ENCODE measurements at regions of chr5 and their contacts with region 1.

Region 1: GRCh38 chr5:43602461-43603343 is at the start of gene NNT:
- DNase-seq: peak; percentile 83 to 89 (median 86)
- ATAC-seq: peak; percentile 84
- H3K4me3 ChIP-seq: peak within 1 kb of the TSS; percentile 60
- H3K27ac ChIP-seq: peak within 1 kb of the TSS; percentile 91
- H3K4me1 ChIP-seq: peaks cover 18% of the 10 kb centered on the region in 2 experiments
- H3K27me3 ChIP-seq: no peaks in the 10 kb centered on the region
- CTCF ChIP-seq: no peak
- EP300 ChIP-seq: no peak; the same call in 1 of the 2 replicates
- POLR2A ChIP-seq: peak; percentile 68
- RAD21 ChIP-seq: no peak
- polyA plus RNA-seq, gene NNT: 21.9 to 30.5 TPM

Region 2: DNA sequence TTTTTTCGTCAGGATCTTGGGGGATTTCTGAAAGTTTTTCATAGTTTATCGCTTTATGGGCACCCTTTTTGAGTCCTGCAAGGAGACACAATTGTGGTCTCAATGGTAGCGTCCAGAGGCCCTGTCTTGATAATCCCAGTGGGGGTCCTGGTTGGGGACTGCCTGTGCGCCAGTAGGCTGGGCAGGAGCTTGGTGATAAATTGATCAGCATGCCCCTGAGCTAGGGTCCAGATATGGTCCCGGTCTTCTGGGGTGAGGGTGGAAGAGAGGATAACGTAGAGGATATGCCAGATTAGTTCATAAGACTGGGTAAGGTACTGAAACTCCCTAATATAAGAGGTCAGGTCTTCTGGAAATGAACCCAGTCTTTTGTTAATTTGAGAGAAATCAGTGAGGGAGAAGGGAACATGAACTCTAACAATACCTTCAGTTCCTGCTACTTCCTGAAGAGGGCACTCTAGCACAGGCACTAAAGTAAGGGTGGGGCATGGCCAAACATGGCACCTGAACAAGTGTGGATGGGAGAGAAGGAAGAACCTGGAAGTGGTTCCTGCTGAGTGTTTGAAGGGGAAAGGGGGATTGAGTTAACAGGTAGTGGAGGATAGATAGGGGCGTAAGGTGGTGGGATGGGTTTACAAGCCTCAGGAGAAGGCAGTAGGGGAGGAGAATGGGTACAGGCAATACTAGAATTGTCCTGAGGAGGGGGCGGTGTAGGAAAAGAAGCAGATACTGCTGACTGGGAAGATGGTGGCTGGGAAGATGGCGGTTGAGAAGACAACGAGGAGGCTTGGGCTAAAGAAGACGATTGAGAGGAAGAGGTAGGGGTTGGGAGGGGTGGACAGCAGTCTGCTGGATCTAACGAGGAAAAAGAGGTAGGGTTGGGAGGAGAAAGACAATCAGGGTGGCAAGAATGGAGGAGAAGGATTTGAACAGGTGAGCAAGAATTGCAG is 528.8 kb before region 1 on chr5:
- CTCF ChIA-PET with region 1: no interaction called
- POLR2A ChIA-PET with region 1: no interaction called
- in situ Hi-C with region 1: no loop called
- intact Hi-C with region 1: loop called (anchors 10 kb)
- DNase-seq: peak; percentile 63 to 86 (median 68)
- ATAC-seq: peak; percentile 63
- H3K4me3 ChIP-seq: no peak overlapping the region
- H3K27ac ChIP-seq: peak overlapping the region; percentile 90
- H3K4me1 ChIP-seq: peaks cover 17 to 37% of the 10 kb centered on the region in 2 experiments
- H3K27me3 ChIP-seq: no peaks in the 10 kb centered on the region
- CTCF ChIP-seq: peak; percentile 84 to 93 (median 85)
- EP300 ChIP-seq: no peak
- POLR2A ChIP-seq: peak; percentile 53
- RAD21 ChIP-seq: peak; percentile 95

Region 3: DNA sequence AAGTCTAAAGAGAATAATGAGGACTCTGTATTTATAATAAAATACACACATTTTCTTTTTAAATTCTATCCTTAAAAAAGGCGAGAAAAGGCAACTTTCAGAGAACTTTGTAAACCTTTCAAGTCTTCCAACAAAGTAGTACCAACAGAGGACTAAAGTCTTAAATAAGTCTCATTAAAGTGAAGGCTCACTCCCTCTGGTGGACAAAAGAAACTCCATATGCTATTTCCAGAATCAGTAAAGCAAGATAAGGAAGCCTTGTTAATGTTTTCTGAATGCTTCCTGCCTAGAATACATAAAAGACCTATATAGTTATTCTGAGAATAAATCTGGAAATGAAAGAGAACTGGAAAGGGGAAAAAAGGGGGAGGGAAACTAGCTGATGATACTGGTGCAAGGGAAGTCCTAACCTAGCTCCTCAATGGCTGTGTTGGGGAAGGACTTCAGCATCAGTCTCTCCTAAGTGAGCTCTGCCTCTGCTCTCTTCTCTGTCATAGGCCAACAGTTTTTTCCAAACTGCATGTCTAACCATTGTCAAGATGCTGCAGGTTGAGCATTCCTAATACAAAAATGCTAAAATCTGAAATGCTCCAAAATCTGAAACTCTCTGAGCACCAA is 296.6 kb before region 1 on chr5:
- CTCF ChIA-PET with region 1: no interaction called
- POLR2A ChIA-PET with region 1: no interaction called
- in situ Hi-C with region 1: no loop called
- intact Hi-C with region 1: loop called (anchors 10 kb)
- DNase-seq: peak; percentile 41 to 85 (median 44)
- ATAC-seq: peak; percentile 78
- H3K4me3 ChIP-seq: no peak overlapping the region
- H3K27ac ChIP-seq: no peak overlapping the region
- H3K4me1 ChIP-seq: peaks cover 11 to 57% of the 10 kb centered on the region in 2 experiments
- H3K27me3 ChIP-seq: no peaks in the 10 kb centered on the region
- CTCF ChIP-seq: peak; percentile 62 to 83 (median 72); a peak in 5 of 6 replicates
- EP300 ChIP-seq: no peak
- POLR2A ChIP-seq: no peak
- RAD21 ChIP-seq: peak; percentile 83 to 85

Region 4: GRCh38 chr5:43514816-43515677 is 87.7 kb before region 1 on chr5 and contains the start of gene C5orf34:
- CTCF ChIA-PET with region 1: no interaction called
- POLR2A ChIA-PET with region 1: no interaction called
- in situ Hi-C with region 1: no loop called
- intact Hi-C with region 1: loop called (anchors 5 kb)
- DNase-seq: peak; percentile 98 to 99 (median 99)
- ATAC-seq: peak; percentile 96
- H3K4me3 ChIP-seq: peak within 1 kb of the TSS; percentile 64
- H3K27ac ChIP-seq: peak within 1 kb of the TSS; percentile 85
- H3K4me1 ChIP-seq: peaks cover 0 to 16% of the 10 kb centered on the region in 2 experiments; a peak in 4 of 5 replicates
- H3K27me3 ChIP-seq: no peaks in the 10 kb centered on the region
- CTCF ChIP-seq: peak in 1 of 3 experiments; percentile 21; a peak in 1 of 6 replicates
- EP300 ChIP-seq: peak; percentile 6; the same call in 1 of the 2 replicates
- POLR2A ChIP-seq: peak; percentile 97
- RAD21 ChIP-seq: 0 out of 4 replicates have a peak, but pooled peaks of 1 of the 2 experiments have one; percentile 9
- polyA plus RNA-seq, gene C5orf34: 21.4 to 27.8 TPM

Region 5: GRCh38 chr5:43556857-43557542 is 45.7 kb before region 1 on chr5 and contains the start of gene PAIP1:
- CTCF ChIA-PET with region 1: no interaction called
- POLR2A ChIA-PET with region 1: interaction called, 5 read pairs
- in situ Hi-C with region 1: no loop called
- intact Hi-C with region 1: loop called (anchors 2 kb)
- DNase-seq: peak; percentile 92 to 93 (median 92)
- ATAC-seq: peak; percentile 90
- H3K4me3 ChIP-seq: peak within 1 kb of the TSS; percentile 78
- H3K27ac ChIP-seq: peak within 1 kb of the TSS; percentile 93
- H3K4me1 ChIP-seq: peaks cover 11 to 21% of the 10 kb centered on the region in 2 experiments
- H3K27me3 ChIP-seq: no peaks in the 10 kb centered on the region
- CTCF ChIP-seq: peak; percentile 61 to 79 (median 68); a peak in 5 of 6 replicates
- EP300 ChIP-seq: 0 out of 2 replicates have a peak, but pooled peaks have one; percentile 3
- POLR2A ChIP-seq: peak; percentile 88
- RAD21 ChIP-seq: peak in 1 of 2 experiments; percentile 14; a peak in 2 of 4 replicates
- polyA plus RNA-seq, gene PAIP1: 51.7 to 56.9 TPM

Region 6: DNA sequence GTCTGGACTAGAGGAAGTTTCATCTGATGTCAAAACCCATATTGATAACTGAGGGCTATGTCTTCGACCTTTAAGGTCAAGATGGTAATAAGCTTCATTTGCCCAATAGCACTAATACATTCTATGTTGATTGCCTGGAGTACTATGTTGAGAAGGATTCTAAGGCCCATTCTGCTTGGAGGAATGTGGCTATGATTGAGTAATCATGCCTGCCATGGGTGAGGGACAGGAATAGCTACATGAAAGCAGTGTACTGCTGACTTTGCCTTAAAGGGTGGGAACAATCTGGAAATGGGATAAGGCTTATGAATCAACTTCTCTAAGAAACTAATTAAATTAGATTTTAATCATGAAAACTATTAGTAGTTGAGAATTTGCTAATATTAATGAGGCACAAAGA is 13.8 kb after region 1 on chr5:
- CTCF ChIA-PET with region 1: no interaction called
- POLR2A ChIA-PET with region 1: interaction called, 4 read pairs
- in situ Hi-C with region 1: no loop called
- intact Hi-C with region 1: loop called (anchors 1 kb)
- DNase-seq: no peak
- ATAC-seq: no peak
- H3K4me3 ChIP-seq: no peak overlapping the region
- H3K27ac ChIP-seq: no peak overlapping the region
- H3K4me1 ChIP-seq: no peaks in the 10 kb centered on the region
- H3K27me3 ChIP-seq: no peaks in the 10 kb centered on the region
- CTCF ChIP-seq: no peak
- EP300 ChIP-seq: no peak
- POLR2A ChIP-seq: no peak
- RAD21 ChIP-seq: no peak

Region 7: DNA sequence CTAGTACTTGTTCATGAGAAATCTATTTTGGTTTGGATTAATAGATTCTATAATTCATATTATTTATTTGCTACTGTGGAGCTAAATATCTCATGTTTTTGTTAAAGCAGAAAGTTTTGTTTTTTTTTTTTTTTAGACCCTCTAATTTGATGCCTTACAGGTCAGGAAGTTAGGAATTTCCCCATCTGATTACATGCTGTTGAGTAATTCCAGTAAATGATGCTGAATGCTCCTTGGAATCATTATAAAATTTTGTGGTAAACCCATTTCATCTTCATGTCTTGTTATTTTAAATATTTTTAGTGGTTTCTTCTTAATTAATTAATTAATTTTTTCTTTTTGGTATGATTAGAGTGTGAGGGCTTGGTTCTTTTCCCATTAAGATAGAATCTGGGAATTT is 35.8 kb after region 1 on chr5:
- CTCF ChIA-PET with region 1: no interaction called
- POLR2A ChIA-PET with region 1: no interaction called
- in situ Hi-C with region 1: no loop called
- intact Hi-C with region 1: no loop called
- DNase-seq: no peak
- ATAC-seq: no peak
- H3K4me3 ChIP-seq: no peak overlapping the region
- H3K27ac ChIP-seq: no peak overlapping the region
- H3K4me1 ChIP-seq: no peaks in the 10 kb centered on the region
- H3K27me3 ChIP-seq: no peaks in the 10 kb centered on the region
- CTCF ChIP-seq: no peak
- EP300 ChIP-seq: no peak
- POLR2A ChIP-seq: no peak
- RAD21 ChIP-seq: no peak

Region 8: DNA sequence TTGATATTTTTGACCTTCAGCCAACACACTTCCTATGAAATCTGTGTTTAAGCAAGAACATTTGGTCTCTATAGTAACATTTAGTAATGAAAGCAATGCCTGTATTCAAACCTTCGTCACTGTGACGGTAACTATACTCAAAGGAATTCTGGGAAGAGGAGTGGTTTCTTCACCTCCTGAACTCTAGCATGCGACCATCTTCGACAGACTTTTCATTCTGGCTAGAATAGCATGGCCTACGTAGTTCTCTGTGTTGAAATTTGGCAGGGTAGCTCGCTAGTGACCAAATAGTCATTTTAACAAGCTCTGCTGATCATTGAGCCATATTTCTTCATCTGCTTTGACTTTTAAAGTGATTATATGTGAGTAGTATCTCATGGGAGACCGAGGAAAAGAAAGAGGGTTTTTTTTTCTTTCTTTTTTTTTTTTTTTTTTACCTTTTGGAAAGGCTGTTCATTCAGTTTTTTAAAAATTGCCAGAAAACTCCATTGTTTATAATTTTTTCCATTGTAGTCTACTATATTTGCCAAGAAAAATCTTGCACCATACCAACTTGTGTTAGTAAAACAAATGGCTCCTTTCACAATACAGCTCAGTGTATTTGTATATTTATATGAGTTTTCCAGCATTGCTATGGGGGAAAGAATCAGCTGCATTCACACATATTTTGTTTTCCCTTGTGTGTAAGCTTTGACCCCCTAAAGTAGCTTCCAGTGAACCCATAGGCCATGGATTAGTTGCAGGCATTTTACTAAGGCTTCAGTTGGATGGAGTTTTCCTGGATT is 167.1 kb after region 1 on chr5:
- CTCF ChIA-PET with region 1: no interaction called
- POLR2A ChIA-PET with region 1: no interaction called
- in situ Hi-C with region 1: no loop called
- intact Hi-C with region 1: no loop called
- DNase-seq: no peak
- ATAC-seq: 0 out of 3 replicates have a peak, but pooled peaks have one; percentile 17
- H3K4me3 ChIP-seq: no peak overlapping the region
- H3K27ac ChIP-seq: no peak overlapping the region
- H3K4me1 ChIP-seq: peaks cover 0 to 11% of the 10 kb centered on the region in 2 experiments; a peak in 3 of 5 replicates
- H3K27me3 ChIP-seq: no peaks in the 10 kb centered on the region
- CTCF ChIP-seq: no peak
- EP300 ChIP-seq: no peak
- POLR2A ChIP-seq: no peak
- RAD21 ChIP-seq: no peak

Region 9: GRCh38 chr5:43802119-43802518 is 199.4 kb after region 1 on chr5:
- CTCF ChIA-PET with region 1: no interaction called
- POLR2A ChIA-PET with region 1: no interaction called
- in situ Hi-C with region 1: no loop called
- intact Hi-C with region 1: no loop called
- DNase-seq: no peak
- ATAC-seq: no peak
- H3K4me3 ChIP-seq: no peak overlapping the region
- H3K27ac ChIP-seq: no peak overlapping the region
- H3K4me1 ChIP-seq: no peaks in the 10 kb centered on the region
- H3K27me3 ChIP-seq: no peaks in the 10 kb centered on the region
- CTCF ChIP-seq: no peak
- EP300 ChIP-seq: no peak
- POLR2A ChIP-seq: no peak
- RAD21 ChIP-seq: no peak

Measured in K562 (cell line).